GM18951 (cell line): ENCODE measurements at regions of chrX and their contacts with region 1.

Region 1: DNA sequence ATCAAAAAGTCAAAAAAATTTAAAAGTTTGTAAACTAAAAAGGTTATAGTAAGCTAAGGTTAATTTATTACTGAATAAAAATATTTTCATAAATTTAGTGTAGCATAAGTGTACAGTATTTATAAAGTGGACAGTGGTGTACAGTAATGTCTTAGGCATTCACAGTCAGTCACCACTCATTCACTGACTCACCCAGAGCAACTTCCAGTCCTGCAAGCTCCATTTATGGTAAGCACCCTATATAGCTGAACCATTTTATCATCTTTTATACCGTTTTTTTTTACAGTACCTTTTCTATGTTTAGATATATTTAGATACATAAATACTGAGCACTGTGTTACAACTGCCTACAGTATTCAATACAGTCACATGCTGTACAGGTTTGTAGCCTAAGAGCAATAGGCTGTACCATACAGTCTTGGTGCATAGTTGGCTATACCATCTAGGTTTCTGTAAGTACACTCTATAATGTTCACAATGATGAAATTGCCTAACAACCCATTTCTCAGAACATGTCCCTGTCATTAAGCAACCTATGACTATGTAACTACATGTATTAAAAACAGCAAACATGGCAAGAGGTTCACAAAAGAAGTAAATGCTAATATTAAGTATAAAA is 18.6 kb downstream of the ACSL4 start:
- POLR2A ChIP-seq: no peak

Region 2: GRCh38 chrX:109501176-109501575 is 213.3 kb before region 1 on chrX:
- in situ Hi-C with region 1: no loop called
- POLR2A ChIP-seq: no peak

Region 3: DNA sequence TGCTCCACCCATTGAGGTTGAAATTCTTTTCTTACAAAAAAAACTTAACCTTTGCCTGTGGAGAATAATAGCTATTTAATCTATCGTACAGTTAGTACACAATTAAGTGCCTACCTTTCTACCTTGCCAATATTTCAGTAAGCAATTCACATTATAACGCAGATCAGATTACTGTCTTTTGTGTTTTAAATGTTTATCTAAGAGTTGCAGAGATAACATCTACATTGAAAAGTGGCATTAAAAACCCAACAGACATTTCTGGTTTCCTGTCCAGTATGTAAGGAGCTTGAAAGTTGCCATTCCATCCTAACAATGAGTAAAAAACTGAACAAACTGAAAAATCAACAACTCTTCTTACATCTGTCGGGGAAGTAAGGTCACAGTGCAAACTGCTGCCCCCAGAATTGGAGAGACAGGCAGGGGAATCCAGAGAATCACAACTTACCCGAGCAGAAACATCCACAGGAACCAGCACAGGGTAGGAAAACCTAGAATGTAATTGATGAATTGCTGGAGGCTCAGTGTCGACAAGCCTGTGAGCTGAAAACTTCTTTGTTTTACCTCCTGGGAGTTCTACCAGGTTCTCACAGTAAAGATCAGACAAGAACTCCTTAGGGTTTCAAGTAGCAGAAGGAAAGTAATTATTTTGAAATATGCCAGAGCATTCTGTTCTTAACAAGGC is 45.9 kb after region 1 on chrX:
- in situ Hi-C with region 1: loop called (anchors 10 kb)
- POLR2A ChIP-seq: no peak

Region 4: DNA sequence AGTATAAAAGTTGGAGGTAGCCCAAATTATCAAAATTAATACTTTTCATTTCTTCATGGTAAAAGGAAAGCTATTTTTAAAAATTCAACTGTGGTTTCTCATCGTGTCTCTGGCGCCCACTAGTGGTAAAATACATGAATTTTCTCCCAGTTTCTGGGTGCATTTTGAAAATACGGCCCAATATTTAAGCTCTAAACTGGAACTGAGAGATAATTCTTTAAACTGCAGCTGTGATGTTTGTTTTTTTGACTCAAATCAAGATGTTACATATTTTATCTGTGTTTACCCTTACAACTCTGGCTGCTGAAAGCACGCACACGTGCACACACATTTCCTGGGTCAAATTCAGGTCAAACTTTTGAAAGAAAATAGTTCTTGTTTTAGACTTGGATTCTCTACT is 142.5 kb after region 1 on chrX:
- in situ Hi-C with region 1: loop called (anchors 5 kb)
- POLR2A ChIP-seq: no peak